HepG2 (cell line): ENCODE measurements at regions of chr3 and their contacts with region 1.

Region 1: DNA sequence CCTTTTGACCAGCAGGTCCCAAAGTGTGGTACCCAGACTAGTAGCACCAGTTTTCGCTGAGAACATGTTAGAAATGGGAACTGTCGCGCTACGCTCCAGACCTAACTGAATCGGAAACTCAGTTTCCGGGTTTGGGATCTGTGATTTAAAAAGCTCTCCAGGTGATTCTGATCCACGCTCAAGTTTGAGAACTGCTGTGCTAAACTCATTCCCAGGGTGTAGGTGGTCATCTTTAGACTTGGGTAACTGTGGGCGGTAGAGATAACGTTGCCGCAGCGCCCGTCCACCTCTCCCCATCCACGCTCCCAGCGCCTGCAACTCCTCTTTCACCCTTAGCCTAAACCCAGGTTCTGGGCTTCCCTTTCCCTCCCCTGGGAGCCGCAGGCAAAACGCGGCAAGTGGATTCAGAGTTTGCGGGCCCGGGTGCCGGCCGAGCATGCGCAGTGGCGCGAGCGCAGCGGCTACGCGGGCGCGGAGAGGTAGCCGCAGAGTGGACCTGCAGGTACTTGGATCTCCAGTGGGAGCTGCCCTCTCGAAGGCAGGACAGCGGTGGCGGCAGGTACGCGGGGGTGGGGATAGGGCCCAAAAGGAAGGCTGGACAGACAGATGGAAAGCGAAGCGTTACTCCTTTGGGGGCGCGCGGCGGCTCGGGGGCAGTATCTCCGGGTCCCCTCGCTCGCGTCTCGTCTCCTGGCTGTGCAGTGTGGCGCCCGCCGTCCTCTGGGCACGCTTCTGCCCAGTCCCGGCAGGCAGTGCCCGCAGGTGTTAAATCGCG is at the start of gene PLS1:
- DNase-seq: peak; percentile 86
- ATAC-seq: peak; percentile 93
- H3K4me3 ChIP-seq: peak within 1 kb of the TSS; percentile 80 to 83 (median 80)
- H3K27ac ChIP-seq: peak within 1 kb of the TSS; percentile 82
- H3K4me1 ChIP-seq: peaks cover 29% of the 10 kb centered on the region
- H3K27me3 ChIP-seq: no peaks in the 10 kb centered on the region; a peak in 1 of 5 replicates
- CTCF ChIP-seq: peak; percentile 18; the same call in 1 of the 2 replicates
- EP300 ChIP-seq: peak; percentile 25 to 45; a peak in 1 of 4 replicates
- POLR2A ChIP-seq: peak; percentile 89 to 93
- RAD21 ChIP-seq: peak; percentile 41
- total RNA-seq, gene PLS1: 21.1 and 34.1 TPM in 2 replicates

Region 2: DNA sequence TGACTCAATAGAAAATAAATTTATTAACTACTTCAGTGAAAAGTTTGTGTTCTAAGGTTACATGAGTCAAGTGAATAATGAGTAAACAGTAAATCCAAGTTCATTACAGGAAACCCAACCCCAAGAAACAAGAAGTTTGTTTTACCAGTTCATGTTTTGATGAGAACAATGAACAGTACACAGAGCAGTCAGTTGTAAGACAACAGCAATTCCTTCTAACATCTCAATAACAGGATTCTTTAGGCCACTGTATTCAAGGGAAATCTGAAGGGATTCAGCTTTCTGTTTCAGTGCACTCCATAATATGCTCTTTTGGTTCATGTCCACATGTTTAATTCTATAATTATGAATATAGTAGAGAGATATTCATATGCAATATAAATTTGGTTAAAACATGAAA is 36.0 kb before region 1 on chr3:
- CTCF ChIA-PET with region 1: no interaction called
- POLR2A ChIA-PET with region 1: no interaction called
- in situ Hi-C with region 1: no loop called
- intact Hi-C with region 1: no loop called
- DNase-seq: no peak
- ATAC-seq: no peak
- H3K4me3 ChIP-seq: no peak overlapping the region
- H3K27ac ChIP-seq: no peak overlapping the region
- H3K4me1 ChIP-seq: no peaks in the 10 kb centered on the region
- H3K27me3 ChIP-seq: no peaks in the 10 kb centered on the region
- CTCF ChIP-seq: no peak
- EP300 ChIP-seq: no peak
- POLR2A ChIP-seq: no peak
- RAD21 ChIP-seq: no peak

Region 3: GRCh38 chr3:142664819-142665218 is 68.7 kb after region 1 on chr3:
- CTCF ChIA-PET with region 1: no interaction called
- POLR2A ChIA-PET with region 1: no interaction called
- in situ Hi-C with region 1: no loop called
- intact Hi-C with region 1: loop called (anchors 2 kb)
- DNase-seq: peak; percentile 21
- ATAC-seq: peak; percentile 75
- H3K4me3 ChIP-seq: peak overlapping the region in 2 of 3 experiments; percentile 47; a peak in 3 of 6 replicates
- H3K27ac ChIP-seq: peak overlapping the region; percentile 74
- H3K4me1 ChIP-seq: peaks cover 27% of the 10 kb centered on the region
- H3K27me3 ChIP-seq: no peaks in the 10 kb centered on the region
- CTCF ChIP-seq: no peak
- EP300 ChIP-seq: no peak
- POLR2A ChIP-seq: no peak
- RAD21 ChIP-seq: no peak

Region 4: DNA sequence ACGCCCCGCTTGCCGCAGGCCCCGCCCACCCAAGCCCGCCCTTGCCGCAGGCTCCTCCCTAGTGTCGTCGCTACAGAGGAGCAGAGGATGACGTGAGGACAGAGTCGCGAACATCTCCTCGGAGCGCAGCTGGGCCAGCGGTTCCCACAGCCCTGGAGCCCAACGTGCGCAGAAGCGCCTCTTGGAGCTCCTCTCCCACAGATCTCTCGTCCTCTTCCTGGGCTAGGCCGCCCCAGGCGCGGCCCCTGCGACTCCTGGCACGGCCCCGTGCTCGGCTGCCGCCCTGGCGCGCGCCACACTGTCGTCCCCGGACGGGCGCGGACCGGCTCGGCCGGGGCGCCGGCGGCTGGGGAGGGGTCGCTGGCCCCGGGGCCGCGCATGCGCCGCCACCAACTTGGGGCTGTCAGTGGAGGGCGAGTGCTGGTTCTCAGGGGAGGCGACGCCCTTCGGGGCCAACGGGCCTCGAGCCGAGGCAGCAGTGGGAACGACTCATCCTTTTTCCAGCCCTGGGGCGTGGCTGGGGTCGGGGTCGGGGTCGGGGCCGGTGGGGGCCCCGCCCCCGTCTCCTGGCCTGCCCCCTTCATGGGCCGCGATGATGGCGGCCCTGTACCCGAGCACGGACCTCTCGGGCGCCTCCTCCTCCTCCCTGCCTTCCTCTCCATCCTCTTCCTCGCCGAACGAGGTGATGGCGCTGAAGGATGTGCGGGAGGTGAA is 128.0 kb after region 1 on chr3 and contains the start of gene TRPC1:
- CTCF ChIA-PET with region 1: no interaction called
- POLR2A ChIA-PET with region 1: interaction called, 5 read pairs
- in situ Hi-C with region 1: no loop called
- intact Hi-C with region 1: loop called (anchors 2 kb)
- DNase-seq: peak; percentile 76
- ATAC-seq: peak; percentile 89
- H3K4me3 ChIP-seq: peak within 1 kb of the TSS; percentile 82 to 97 (median 96)
- H3K27ac ChIP-seq: peak within 1 kb of the TSS; percentile 92
- H3K4me1 ChIP-seq: peaks cover 18% of the 10 kb centered on the region
- H3K27me3 ChIP-seq: no peaks in the 10 kb centered on the region; a peak in 1 of 5 replicates
- CTCF ChIP-seq: no peak; the same call in 1 of the 2 replicates
- EP300 ChIP-seq: no peak
- POLR2A ChIP-seq: peak; percentile 93 to 99
- RAD21 ChIP-seq: no peak; the same call in 1 of the 2 replicates
- total RNA-seq, gene TRPC1: 7.6 and 10.8 TPM in 2 replicates

Region 5: DNA sequence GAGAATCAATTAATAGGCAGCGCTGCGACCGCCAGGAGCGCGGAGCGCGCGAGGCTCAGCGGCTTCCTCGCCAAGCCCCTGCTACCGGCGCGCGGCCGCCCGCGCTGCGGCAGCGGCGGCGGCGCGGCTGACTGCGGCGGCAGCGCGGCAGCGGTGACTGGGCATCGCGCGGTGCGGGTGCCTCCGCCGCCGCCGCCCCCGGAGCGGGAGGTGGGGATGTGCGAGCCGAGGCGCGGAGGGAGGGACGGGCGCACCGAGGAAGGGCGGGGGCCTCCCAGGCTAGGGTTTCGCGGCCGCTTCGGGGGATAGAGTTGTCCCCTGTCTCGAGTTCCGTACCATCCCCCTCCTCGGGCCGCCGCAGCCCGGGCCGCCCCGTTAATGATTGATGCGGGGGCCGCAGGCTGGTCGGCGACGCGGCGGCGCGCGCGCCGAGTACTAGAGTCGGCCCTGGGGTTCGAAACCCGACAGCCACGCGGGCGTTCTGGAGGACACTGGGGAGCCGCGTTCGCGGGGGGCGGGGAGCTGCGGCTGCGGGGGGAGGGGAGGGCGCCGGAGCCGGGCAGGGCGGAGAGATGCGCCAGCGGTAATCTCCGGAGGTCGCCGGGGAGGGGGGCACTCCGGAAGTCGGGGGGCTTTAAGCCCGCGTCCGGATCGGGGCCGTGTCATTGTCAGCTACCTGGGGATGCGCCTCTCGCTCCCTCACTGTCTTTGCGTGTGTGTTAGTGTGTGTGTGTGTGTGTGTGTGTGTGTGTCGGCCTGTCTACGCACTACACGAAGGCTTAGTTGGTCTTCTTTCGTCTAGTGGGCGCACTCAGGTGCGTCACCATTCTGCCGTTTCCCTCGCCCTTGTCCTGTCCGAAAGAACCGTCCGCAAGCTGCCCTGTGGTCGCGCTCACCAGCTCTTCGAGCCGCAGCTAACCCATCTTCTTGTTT is 367.6 kb after region 1 on chr3 and contains the start of gene PAQR9:
- CTCF ChIA-PET with region 1: no interaction called
- POLR2A ChIA-PET with region 1: no interaction called
- in situ Hi-C with region 1: no loop called
- intact Hi-C with region 1: no loop called
- DNase-seq: peak; percentile 47
- ATAC-seq: peak; percentile 89
- H3K4me3 ChIP-seq: peak within 1 kb of the TSS; percentile 55 to 72 (median 66); a peak in 5 of 6 replicates
- H3K27ac ChIP-seq: peak within 1 kb of the TSS; percentile 68
- H3K4me1 ChIP-seq: peaks cover 55% of the 10 kb centered on the region
- H3K27me3 ChIP-seq: peaks cover 0 to 10% of the 10 kb centered on the region in 2 experiments; a peak in 1 of 5 replicates
- CTCF ChIP-seq: 0 out of 2 replicates have a peak, but pooled peaks have one; percentile 9
- EP300 ChIP-seq: no peak
- POLR2A ChIP-seq: no peak
- RAD21 ChIP-seq: peak; percentile 39
- total RNA-seq, gene PAQR9: 10.3 and 10.4 TPM in 2 replicates